Activated B cell treated with CpG ODN at 0.5 μM for 24 hours (primary cell): ENCODE measurements at regions of chr6 and their contacts with region 1.

Region 1: GRCh38 chr6:26196846-26197648 is 109.8 kb downstream of the HFE start:
- DNase-seq: peak; percentile 63
- ATAC-seq: peak; percentile 53
- H3K4me3 Mint-ChIP-seq: peak overlapping the region; percentile 93
- H3K27ac Mint-ChIP-seq: peak overlapping the region; percentile 96
- H3K4me1 Mint-ChIP-seq: peaks cover 52% of the 10 kb centered on the region
- H3K27me3 Mint-ChIP-seq: no peaks in the 10 kb centered on the region
- CTCF ChIP-seq: no peak

Region 2: GRCh38 chr6:26054857-26055669 is 142.0 kb before region 1 on chr6:
- CTCF ChIA-PET with region 1: no interaction called
- POLR2A ChIA-PET with region 1: interaction called, 80 read pairs
- intact Hi-C with region 1: no loop called
- DNase-seq: peak; percentile 63
- ATAC-seq: peak; percentile 65
- H3K4me3 Mint-ChIP-seq: peak overlapping the region; percentile 97
- H3K27ac Mint-ChIP-seq: peak overlapping the region; percentile 100
- H3K4me1 Mint-ChIP-seq: peaks cover 20% of the 10 kb centered on the region
- H3K27me3 Mint-ChIP-seq: no peaks in the 10 kb centered on the region
- CTCF ChIP-seq: no peak

Region 3: DNA sequence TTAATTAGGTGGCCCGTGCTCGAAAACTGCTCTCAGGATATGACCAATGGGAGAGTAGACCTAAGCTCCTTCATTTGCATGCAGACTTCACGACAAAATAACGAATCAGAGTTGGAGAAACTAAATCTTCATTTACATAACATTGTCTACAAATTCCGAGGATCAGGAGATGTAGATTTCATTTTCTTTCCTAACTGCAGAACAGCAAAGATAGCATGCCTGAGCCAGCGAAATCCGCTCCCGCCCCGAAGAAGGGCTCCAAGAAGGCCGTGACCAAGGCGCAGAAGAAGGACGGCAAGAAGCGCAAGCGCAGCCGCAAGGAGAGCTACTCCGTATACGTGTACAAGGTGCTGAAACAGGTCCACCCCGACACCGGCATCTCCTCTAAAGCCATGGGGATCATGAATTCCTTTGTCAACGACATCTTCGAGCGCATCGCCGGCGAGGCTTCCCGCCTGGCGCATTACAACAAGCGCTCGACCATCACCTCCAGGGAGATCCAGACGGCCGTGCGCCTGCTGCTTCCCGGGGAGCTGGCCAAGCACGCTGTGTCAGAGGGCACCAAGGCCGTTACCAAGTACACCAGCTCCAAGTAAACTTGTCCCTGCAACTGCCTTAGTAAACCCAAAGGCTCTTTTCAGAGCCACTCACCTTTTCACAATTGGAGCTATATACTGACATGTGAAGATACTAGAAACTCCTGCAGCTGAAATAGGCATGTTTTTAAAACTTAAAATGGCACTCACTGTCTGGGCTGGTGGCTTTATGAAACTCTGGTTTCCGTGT is 13.3 kb before region 1 on chr6:
- CTCF ChIA-PET with region 1: interaction called, 9 read pairs
- POLR2A ChIA-PET with region 1: interaction called, 587 read pairs
- intact Hi-C with region 1: loop called (anchors 1 kb)
- DNase-seq: peak; percentile 60
- ATAC-seq: peak; percentile 86
- H3K4me3 Mint-ChIP-seq: peak overlapping the region; percentile 98
- H3K27ac Mint-ChIP-seq: peak overlapping the region; percentile 91
- H3K4me1 Mint-ChIP-seq: peaks cover 30% of the 10 kb centered on the region
- H3K27me3 Mint-ChIP-seq: no peaks in the 10 kb centered on the region
- CTCF ChIP-seq: no peak

Region 4: GRCh38 chr6:26322645-26323482 is 125.8 kb after region 1 on chr6:
- CTCF ChIA-PET with region 1: no interaction called
- POLR2A ChIA-PET with region 1: interaction called, 12 read pairs
- intact Hi-C with region 1: no loop called
- DNase-seq: no peak
- ATAC-seq: peak; percentile 56
- H3K4me3 Mint-ChIP-seq: peak overlapping the region; percentile 89
- H3K27ac Mint-ChIP-seq: peak overlapping the region; percentile 85
- H3K4me1 Mint-ChIP-seq: peaks cover 25% of the 10 kb centered on the region
- H3K27me3 Mint-ChIP-seq: peaks cover 14% of the 10 kb centered on the region
- CTCF ChIP-seq: no peak

Region 5: GRCh38 chr6:27138837-27139755 is 942.0 kb after region 1 on chr6:
- CTCF ChIA-PET with region 1: no interaction called
- POLR2A ChIA-PET with region 1: interaction called, 111 read pairs
- intact Hi-C with region 1: no loop called
- DNase-seq: peak; percentile 59
- ATAC-seq: peak; percentile 82
- H3K4me3 Mint-ChIP-seq: peak overlapping the region; percentile 97
- H3K27ac Mint-ChIP-seq: peak overlapping the region; percentile 98
- H3K4me1 Mint-ChIP-seq: peaks cover 62% of the 10 kb centered on the region
- H3K27me3 Mint-ChIP-seq: no peaks in the 10 kb centered on the region
- CTCF ChIP-seq: no peak

Region 6: DNA sequence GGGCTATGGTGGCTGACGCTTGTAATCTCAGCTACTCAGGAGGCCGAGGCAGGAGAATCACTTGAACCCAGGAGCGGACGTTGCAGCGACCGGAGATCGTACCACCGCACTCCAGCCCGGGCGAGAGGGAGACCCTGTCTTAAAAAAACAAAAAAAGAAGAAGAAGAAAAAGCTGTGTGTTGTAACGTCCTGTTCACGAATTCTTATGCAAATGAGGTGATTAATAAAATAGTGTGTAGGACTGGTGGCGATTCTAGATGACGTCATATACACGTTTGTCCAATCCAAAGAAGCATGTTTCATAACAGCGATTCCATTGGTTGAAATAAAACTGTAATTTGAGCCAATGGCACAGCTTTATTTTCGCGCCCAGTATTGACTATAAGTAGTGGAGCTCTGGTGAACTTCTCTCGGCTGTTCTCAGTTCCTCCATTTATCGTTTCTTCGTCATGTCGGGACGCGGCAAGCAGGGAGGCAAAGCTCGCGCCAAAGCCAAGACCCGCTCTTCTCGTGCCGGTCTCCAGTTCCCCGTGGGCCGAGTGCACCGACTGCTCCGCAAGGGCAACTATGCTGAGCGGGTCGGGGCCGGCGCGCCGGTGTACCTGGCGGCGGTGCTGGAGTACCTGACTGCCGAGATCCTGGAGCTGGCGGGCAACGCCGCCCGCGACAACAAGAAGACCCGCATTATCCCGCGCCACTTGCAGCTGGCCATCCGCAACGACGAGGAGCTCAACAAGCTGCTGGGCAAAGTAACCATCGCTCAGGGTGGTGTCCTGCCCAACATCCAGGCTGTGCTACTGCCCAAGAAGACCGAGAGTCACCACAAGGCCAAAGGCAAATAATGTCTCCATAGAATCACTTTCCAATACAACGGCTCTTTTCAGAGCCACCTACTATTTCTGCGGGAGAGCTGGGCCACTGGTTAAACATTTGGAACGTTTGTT is 1668.1 kb after region 1 on chr6:
- CTCF ChIA-PET with region 1: no interaction called
- POLR2A ChIA-PET with region 1: interaction called, 46 read pairs
- intact Hi-C with region 1: loop called (anchors 1 kb)
- DNase-seq: peak; percentile 68
- ATAC-seq: peak; percentile 85
- H3K4me3 Mint-ChIP-seq: peak overlapping the region; percentile 98
- H3K27ac Mint-ChIP-seq: peak overlapping the region; percentile 99
- H3K4me1 Mint-ChIP-seq: peaks cover 48% of the 10 kb centered on the region
- H3K27me3 Mint-ChIP-seq: no peaks in the 10 kb centered on the region
- CTCF ChIP-seq: no peak